ENCODE measurements at regions of chr6 and their contacts with region 1.

Region 1: DNA sequence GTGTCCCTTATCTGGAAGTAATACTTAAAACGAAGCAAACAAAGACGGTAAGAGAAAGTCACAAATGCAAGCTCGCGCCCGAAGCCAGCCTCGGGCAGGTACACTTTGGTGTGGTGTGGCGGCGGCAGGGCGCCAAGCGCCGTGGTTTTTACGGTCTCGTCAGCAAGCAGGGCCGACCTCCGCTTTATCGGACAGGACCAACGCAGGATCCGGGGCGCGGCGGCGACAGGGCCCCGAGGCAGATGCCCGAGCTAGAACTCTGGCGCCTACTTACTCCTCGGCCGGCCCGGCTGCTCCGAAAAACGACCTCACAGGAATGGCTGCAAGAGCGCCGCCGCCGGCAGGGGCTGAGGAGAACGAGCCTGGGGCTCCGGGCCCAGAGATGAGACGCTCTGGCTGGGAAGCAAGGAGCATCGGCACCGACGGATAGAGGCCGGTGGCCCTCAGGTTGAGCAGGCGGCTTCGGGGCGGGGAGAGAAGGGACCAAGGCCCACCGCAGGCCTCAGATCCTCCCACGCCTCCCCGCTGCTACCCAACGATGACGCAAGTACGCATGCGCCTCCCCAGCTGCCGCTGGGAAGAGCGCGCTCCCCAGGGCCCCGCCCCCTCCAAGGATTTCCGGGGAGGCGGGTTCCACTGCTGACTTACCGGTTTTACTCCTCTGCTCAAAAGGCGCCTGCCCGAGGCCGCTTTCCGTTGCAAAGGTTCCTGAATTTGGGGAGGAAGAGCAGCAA is 60.6 kb downstream of the FAM217A start:
- DNase-seq: peak; percentile 97
- H3K4me3 ChIP-seq: peak overlapping the region; percentile 89
- H3K27ac ChIP-seq: peak overlapping the region; percentile 94
- H3K4me1 ChIP-seq: peaks cover 38% of the 10 kb centered on the region
- CTCF ChIP-seq: peak; percentile 68

Region 2: DNA sequence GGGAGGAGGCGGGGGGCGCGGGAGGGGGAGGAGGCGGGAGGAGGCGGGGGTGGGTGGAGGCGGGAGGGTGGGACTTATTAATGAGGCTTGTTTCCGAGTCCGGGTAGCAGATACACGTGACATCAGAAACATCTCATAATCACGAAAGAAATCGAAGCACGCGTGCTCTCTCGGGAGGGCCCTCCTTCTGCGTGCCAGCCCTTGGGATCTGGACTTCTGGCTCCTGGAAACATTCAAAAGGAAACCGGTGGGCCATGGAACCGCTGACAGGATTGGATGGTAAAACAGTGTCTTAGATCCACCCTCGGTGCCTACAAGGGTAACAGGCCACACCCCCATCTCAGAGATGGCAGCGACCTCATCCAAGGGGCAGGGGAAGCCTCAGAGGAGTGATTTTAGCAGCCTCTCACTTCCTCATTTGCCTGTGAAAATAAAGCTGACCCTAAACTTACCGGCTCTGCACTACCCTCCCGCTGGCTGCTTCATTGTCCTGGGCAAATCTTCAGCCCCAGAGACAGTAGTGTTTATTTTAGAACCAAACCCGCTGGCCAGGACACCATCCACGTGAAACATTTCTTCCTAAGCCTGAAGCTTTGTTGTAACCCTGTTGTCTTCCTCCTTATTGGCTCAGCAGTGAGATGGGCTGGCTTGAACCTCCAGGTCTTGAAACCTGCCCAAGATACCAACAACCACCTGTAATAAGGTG is 662.1 kb before region 1 on chr6:
- CTCF ChIA-PET with region 1: no interaction called
- POLR2A ChIA-PET with region 1: no interaction called
- intact Hi-C with region 1: loop called (anchors 10 kb)
- DNase-seq: peak; percentile 95
- H3K4me3 ChIP-seq: peak overlapping the region; percentile 66
- H3K27ac ChIP-seq: peak overlapping the region; percentile 84
- H3K4me1 ChIP-seq: peaks cover 57% of the 10 kb centered on the region
- CTCF ChIP-seq: no peak

Region 3: GRCh38 chr6:3956054-3956453 is 62.3 kb before region 1 on chr6:
- CTCF ChIA-PET with region 1: no interaction called
- POLR2A ChIA-PET with region 1: no interaction called
- intact Hi-C with region 1: no loop called
- DNase-seq: no peak
- H3K4me3 ChIP-seq: no peak overlapping the region
- H3K27ac ChIP-seq: no peak overlapping the region
- H3K4me1 ChIP-seq: no peaks in the 10 kb centered on the region
- CTCF ChIP-seq: no peak

Region 4: GRCh38 chr6:4032475-4032874 is 14.1 kb after region 1 on chr6:
- CTCF ChIA-PET with region 1: interaction called, 4 read pairs
- POLR2A ChIA-PET with region 1: interaction called, 10 read pairs
- intact Hi-C with region 1: no loop called
- DNase-seq: no peak
- H3K4me3 ChIP-seq: no peak overlapping the region
- H3K27ac ChIP-seq: no peak overlapping the region
- H3K4me1 ChIP-seq: peaks cover 12% of the 10 kb centered on the region
- CTCF ChIP-seq: no peak

Region 5: GRCh38 chr6:4879724-4880371 is 861.5 kb after region 1 on chr6:
- CTCF ChIA-PET with region 1: no interaction called
- POLR2A ChIA-PET with region 1: no interaction called
- intact Hi-C with region 1: loop called (anchors 10 kb)
- DNase-seq: peak; percentile 67
- H3K4me3 ChIP-seq: peak overlapping the region; percentile 60
- H3K27ac ChIP-seq: peak overlapping the region; percentile 76
- H3K4me1 ChIP-seq: peaks cover 75% of the 10 kb centered on the region
- CTCF ChIP-seq: no peak

Measured in OCI-LY7 (cell line).